OCI-LY7 (cell line): ENCODE measurements at regions of chr19 and their contacts with region 1.

Region 1: DNA sequence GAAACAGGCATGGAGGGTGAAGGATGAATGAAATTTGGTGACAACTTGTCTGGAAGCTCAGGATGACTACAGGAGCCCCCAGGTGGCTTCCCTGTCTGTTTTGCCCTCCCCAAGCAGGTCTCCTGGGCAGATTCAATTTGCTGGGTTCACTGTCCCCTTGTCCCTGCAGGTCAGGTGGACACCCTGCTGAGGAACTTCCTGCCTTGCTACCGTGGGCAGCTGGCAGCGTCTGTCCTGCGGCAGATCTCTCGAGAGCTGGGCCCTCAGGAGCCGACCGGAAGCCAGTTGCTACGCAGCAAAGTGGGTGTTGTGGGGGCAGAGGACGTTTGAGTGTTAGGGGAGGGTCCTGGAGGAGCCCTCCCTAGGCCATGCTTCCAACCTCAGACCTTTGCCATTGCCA is 19.1 kb downstream of the PGLS start:
- DNase-seq: no peak
- H3K4me3 ChIP-seq: peak overlapping the region; percentile 69
- H3K27ac ChIP-seq: peak overlapping the region; percentile 95
- H3K4me1 ChIP-seq: peaks cover 48% of the 10 kb centered on the region
- CTCF ChIP-seq: no peak

Region 2: GRCh38 chr19:17488593-17489391 is 41.8 kb before region 1 on chr19:
- CTCF ChIA-PET with region 1: no interaction called
- POLR2A ChIA-PET with region 1: no interaction called
- intact Hi-C with region 1: no loop called
- DNase-seq: peak; percentile 93
- H3K4me3 ChIP-seq: peak overlapping the region; percentile 61
- H3K27ac ChIP-seq: no peak overlapping the region
- H3K4me1 ChIP-seq: peaks cover 26% of the 10 kb centered on the region
- CTCF ChIP-seq: peak; percentile 78

Region 3: GRCh38 chr19:17511724-17512573 is 18.6 kb before region 1 on chr19:
- CTCF ChIA-PET with region 1: interaction called, 3 read pairs
- POLR2A ChIA-PET with region 1: interaction called, 15 read pairs
- intact Hi-C with region 1: no loop called
- DNase-seq: peak; percentile 80
- H3K4me3 ChIP-seq: peak overlapping the region; percentile 83
- H3K27ac ChIP-seq: peak overlapping the region; percentile 74
- H3K4me1 ChIP-seq: peaks cover 17% of the 10 kb centered on the region
- CTCF ChIP-seq: peak; percentile 51